Activated T-helper 2 cell treated with anti-CD3 and anti-CD28 coated beads, Interferon-gamma antibody, Interleukin-2, Interleukin-4, amounts not matched to agents 10 μg/mL and 5 μg/mL and 100 μg/mL, durations not matched to agents 14 hours and 24 hours and 36 hours (primary cell): ENCODE measurements at regions of chrX and their contacts with region 1.

Region 1: DNA sequence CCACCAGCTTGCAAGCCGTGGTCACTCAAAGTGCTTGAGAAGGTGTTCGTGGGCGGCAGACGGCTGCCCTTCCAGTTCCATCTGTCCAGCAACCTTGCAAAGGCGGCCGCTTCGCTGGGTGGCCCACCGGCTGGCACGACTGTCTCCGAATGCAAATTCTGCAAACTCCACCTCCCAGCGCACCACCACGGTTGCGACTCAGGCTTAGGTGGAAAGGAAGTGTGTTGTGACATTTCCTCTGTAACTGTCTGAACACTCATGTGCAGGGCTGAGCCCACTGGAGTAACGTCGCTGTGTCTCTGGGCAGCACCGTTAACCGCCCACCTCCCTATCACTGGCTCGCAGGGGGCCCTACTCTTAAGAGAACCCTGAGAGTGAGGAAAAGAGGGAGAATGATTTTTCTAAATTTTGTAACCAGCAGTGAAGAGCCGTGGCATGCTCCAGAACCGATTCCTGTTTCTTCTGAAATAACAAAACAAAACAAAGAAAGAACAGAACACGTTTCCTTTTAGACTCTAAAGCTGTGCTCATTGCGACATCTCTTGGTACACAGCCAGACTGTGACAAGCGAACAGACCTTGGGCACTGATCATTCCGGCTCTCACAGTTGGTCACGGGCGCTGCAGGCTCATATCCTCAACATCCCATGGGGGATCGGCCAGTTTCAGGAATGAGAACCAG is at the start of gene P2RY8:
- DNase-seq: peak; percentile 77
- H3K4me3 Mint-ChIP-seq: peak within 1 kb of the TSS; percentile 94
- H3K27ac Mint-ChIP-seq: peak within 1 kb of the TSS; percentile 99
- H3K4me1 Mint-ChIP-seq: peaks cover 14% of the 10 kb centered on the region
- H3K27me3 Mint-ChIP-seq: no peaks in the 10 kb centered on the region
- total RNA-seq, gene P2RY8: 33.1 and 34.5 TPM in 2 replicates

Region 2: DNA sequence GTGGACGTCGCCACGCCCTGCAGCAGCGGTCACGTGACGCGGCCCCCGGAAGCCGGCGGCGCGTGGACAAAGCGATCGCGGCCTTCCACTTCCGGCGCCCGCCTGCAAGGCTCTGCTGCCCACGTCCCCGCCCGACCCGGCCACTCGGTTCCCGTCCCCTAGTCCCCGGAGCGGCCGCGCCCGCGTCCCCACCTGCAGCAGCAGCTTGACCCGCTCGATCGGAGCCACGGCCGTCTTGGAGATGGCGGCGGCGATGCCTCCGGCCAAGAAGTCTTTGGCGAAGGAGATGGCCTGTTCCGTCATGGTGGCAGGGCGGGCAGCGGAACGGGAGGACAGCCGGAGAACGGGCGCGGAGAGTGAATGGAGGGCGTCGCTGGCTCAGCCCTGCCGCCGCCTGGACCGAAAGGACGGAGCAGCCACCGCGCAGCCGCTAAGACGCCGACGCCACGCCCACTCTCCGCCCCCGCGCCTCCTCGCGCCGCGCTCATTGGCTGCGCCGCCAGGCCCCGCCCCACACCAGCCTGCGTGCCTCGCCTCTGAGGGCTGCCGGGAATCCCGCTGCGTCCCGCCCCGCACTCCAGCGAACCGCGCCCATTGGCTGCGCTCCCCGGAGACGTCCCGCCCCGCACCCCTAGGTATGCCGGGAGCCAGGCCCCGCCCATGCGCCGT is 145.3 kb before region 1 on chrX and contains the start of gene SLC25A6:
- intact Hi-C with region 1: loop called (anchors 5 kb)
- DNase-seq: peak; percentile 99
- H3K4me3 Mint-ChIP-seq: peak within 1 kb of the TSS; percentile 95
- H3K27ac Mint-ChIP-seq: peak within 1 kb of the TSS; percentile 95
- H3K4me1 Mint-ChIP-seq: peaks cover 26% of the 10 kb centered on the region
- H3K27me3 Mint-ChIP-seq: no peaks in the 10 kb centered on the region
- total RNA-seq, gene SLC25A6: 318 and 325 TPM in 2 replicates

Region 3: DNA sequence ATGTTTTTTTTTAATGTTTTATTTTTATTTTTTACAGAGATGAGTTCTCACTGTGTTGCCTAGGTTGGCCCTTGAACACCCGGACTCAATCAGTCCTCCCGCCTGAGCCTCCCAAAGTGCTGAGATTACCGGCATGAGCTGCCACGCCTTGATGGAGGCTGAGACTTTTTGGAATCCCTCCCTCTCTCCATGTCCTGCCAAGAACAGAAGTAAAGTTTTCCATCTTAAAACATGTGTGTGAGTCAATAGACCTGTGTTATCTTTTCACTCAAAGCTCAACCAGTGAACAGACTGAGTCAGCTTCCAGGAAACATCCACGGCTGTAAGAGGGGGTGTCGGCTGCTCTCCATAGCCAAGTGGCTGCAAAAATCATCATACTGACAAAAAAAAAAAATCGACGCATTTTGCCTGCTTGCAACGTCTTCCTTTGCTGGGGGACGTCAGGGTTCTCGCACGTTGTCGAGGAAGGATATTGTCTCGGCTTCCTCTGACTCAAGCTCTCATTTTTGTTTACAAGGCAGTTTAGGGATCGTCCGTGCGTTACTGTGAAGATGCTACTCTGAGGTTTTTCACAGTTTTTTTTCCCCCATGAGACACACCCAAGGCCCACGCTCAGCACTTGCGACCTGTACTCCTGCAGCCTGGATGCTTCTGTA is 74.5 kb before region 1 on chrX:
- intact Hi-C with region 1: loop called (anchors 1 kb)
- DNase-seq: peak; percentile 81
- H3K4me3 Mint-ChIP-seq: peak overlapping the region; percentile 59
- H3K27ac Mint-ChIP-seq: peak overlapping the region; percentile 96
- H3K4me1 Mint-ChIP-seq: peaks cover 54% of the 10 kb centered on the region
- H3K27me3 Mint-ChIP-seq: no peaks in the 10 kb centered on the region

Region 4: GRCh38 chrX:1481636-1482529 is 55.3 kb before region 1 on chrX:
- intact Hi-C with region 1: loop called (anchors 1 kb)
- DNase-seq: peak; percentile 83
- H3K4me3 Mint-ChIP-seq: peak overlapping the region; percentile 87
- H3K27ac Mint-ChIP-seq: peak overlapping the region; percentile 99
- H3K4me1 Mint-ChIP-seq: peaks cover 61% of the 10 kb centered on the region
- H3K27me3 Mint-ChIP-seq: no peaks in the 10 kb centered on the region

Region 5: DNA sequence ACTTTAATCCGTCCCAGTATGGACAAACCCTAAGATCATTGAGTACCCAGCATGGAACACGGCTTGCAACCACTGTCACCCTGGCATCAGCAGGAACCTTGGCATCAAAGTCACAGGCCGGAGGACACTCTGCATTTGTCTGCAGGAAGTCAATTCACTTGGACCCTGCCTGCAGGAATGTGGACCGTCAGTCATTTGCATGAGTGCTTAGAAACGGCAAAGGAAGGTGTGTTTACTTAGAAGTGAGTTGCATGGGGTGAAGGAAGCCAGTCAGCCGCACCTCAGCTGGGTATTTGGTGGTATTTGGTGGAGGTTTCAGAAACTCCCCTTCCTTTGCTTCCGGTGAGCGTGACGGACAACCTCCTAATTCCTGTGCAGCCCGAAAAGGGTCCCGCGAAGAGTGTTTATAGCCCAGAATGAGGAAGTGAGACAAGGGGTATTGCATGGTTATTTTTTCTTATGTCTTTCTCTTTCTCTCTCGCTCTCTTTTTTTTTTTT is 15.7 kb before region 1 on chrX:
- intact Hi-C with region 1: loop called (anchors 1 kb)
- DNase-seq: peak; percentile 70
- H3K4me3 Mint-ChIP-seq: peak overlapping the region; percentile 69
- H3K27ac Mint-ChIP-seq: peak overlapping the region; percentile 80
- H3K4me1 Mint-ChIP-seq: peaks cover 44% of the 10 kb centered on the region
- H3K27me3 Mint-ChIP-seq: no peaks in the 10 kb centered on the region

Region 6: DNA sequence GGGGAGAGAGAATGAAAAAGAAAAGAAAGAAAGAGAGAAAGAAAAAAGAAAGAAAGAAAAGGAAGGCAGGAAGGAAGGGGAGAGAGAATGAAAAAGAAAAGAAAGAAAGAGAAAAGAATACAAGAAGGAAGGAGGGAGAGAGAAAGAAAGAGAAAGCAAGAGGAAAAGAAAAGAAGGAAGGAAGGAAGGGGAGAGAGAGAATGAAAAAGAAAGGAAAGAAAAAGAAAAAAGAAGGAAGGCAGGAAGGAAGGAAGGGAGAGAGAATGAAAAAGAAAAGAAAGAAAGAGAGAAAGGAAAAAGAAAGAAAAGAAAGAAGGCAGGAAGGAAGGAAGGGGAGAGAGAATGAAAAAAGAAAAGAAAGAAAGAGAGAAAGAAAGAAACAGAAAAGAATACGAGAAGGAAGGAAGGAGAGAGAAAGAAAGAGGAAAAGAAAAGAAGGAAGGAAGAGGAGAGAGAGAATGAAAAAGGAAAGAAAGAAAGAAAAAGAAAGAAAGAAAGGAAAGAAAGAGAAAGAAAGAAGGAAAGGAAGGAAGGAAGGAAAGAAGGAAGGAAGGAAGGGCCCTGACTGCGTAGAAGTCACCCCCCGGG is 14.9 kb after region 1 on chrX:
- intact Hi-C with region 1: no loop called
- DNase-seq: no peak
- H3K4me3 Mint-ChIP-seq: no peak overlapping the region
- H3K27ac Mint-ChIP-seq: no peak overlapping the region
- H3K4me1 Mint-ChIP-seq: peaks cover 25% of the 10 kb centered on the region
- H3K27me3 Mint-ChIP-seq: peaks cover 5% of the 10 kb centered on the region

Region 7: GRCh38 chrX:1591102-1591900 is 54.1 kb after region 1 on chrX and contains the start of gene AKAP17A:
- intact Hi-C with region 1: loop called (anchors 1 kb)
- DNase-seq: peak; percentile 98
- H3K4me3 Mint-ChIP-seq: peak within 1 kb of the TSS; percentile 93
- H3K27ac Mint-ChIP-seq: peak within 1 kb of the TSS; percentile 92
- H3K4me1 Mint-ChIP-seq: peaks cover 24% of the 10 kb centered on the region
- H3K27me3 Mint-ChIP-seq: no peaks in the 10 kb centered on the region
- total RNA-seq, gene AKAP17A: 67.4 and 67.6 TPM in 2 replicates